HAP-1 (cell line): ENCODE measurements at regions of chr2 and their contacts with region 1.

Region 1: DNA sequence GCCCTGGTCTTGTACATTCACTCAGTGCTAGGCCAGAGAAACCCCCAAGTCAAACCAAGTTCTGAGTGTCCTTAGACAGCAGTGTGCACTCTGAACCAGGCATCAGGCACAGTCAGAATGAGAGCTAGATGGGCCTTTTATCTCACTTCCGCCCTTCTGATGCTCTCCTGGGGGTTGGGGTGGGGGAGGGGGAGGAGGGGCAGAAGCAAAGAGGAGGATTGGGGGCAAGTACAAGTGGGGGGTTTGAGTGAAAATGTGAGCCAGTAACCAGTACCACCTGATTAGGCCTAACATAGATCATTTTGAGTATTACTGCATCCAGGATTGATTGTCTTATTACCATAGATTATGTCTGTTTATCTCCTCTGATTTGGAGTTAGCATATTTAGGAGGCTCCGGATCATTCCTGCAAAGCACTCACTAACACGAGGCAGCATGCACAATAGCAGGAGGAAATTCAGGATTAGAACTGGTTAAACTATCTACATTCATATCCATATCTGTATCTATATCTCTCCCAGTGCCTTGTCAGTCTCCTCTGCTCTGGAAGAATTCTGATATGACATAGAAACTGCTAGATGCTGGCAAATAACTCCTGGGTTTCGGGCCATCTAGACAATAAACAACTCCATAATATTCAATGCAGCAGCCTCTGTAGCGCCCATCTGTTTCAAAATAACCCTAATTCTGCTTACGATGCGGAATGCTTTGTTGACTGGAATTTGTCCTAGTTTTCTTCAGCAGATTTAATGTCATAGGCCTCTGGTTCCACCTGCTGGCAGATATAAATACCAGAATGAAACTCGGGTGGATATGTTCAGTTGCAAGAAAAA is 149.1 kb downstream of the RHBDD1 start:
- DNase-seq: peak; percentile 56 to 63
- H3K4me3 ChIP-seq: no peak overlapping the region
- H3K4me1 ChIP-seq: no peaks in the 10 kb centered on the region
- H3K27me3 ChIP-seq: peaks cover 5% of the 10 kb centered on the region; the same call in 1 of the 2 replicates

Region 2: DNA sequence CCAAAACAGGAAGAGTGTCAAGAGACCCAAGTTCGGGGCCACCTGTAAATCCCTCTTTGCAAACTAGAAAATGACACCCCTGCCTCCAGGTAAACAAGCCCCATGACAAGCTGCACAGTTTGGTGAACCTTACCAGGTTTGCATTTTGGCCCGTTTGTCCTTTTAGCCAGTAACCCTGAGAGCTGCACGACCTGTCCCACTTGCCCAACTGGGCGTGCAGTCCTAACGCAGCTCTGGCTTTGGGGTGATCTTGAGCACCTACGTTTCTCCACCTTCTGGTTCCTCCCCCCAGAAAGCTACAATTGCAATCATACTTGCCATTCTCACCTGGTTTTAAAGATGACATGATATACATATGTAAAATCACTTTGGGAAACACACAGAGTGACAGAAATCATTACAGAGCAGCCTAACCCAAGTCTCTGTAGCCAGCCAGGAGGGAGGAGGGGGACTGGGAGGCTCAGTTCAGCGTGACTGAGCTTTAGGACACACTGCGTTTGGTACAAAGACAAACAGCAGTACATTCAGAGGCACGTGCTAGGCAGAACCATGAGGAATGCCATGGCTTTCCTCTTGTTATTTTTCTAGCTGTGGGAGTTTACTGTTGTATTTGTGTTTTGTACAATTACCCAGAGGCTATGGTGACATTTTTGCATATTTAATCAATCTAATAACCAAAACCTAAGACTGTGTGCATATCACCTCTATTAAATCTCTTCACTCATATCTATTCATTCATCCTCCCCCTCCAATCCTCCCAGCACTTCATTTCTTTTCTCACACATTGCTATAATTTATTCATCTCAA is 489.3 kb before region 1 on chr2:
- in situ Hi-C with region 1: no loop called
- DNase-seq: no peak
- H3K4me3 ChIP-seq: no peak overlapping the region
- H3K4me1 ChIP-seq: no peaks in the 10 kb centered on the region
- H3K27me3 ChIP-seq: no peaks in the 10 kb centered on the region

Region 3: DNA sequence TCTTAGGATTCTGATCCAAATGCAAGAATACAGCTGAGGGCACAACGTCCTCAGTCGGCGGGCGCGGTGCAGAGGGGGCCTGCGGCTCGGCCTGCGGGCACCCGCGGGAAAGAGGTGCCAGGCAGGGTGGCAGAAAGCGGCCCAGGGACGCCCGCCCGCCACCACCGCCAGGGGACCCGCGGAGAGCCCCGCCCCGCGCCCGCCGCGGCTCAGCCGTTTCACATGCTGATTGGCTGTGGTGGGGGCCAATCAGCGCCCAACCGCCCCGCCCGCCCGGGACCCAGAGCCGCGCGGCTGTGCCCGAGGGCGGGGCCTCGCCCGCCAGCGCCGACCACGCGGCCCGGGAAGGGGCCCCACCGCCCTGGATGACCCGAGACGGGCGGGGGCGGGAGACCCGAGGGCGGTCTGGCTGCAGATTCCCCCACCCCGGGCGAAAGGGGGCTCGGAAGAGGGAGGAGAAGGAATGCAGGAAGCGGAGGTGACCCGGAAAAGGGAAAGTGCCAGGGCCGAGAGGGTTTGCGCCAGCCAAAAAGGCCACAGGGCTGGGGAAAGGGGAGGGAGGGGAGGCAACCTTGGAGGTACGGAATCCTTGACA is 193.4 kb before region 1 on chr2:
- in situ Hi-C with region 1: loop called (anchors 10 kb)
- DNase-seq: peak; percentile 82 to 92
- H3K4me3 ChIP-seq: peak overlapping the region; percentile 35
- H3K4me1 ChIP-seq: peaks cover 4% of the 10 kb centered on the region
- H3K27me3 ChIP-seq: no peaks in the 10 kb centered on the region